Activated CD4-positive, alpha-beta T cell treated with anti-CD3 and anti-CD28 coated beads, Interleukin-2, amount 10 ng/mL, durations not matched to agents 24 days and 14 days (primary cell): ENCODE measurements at regions of chr21 and their contacts with region 1.

Region 1: GRCh38 chr21:32612075-32612998 is at the start of gene CFAP298:
- DNase-seq: peak; percentile 96
- H3K4me3 Mint-ChIP-seq: peak within 1 kb of the TSS; percentile 99
- H3K27ac Mint-ChIP-seq: peak within 1 kb of the TSS; percentile 96
- H3K4me1 Mint-ChIP-seq: peaks cover 7% of the 10 kb centered on the region
- H3K27me3 Mint-ChIP-seq: peaks cover 5% of the 10 kb centered on the region
- total RNA-seq, gene CFAP298: 52.5 and 57.6 TPM in 2 replicates

Region 2: GRCh38 chr21:32278518-32279376 is 333.6 kb before region 1 on chr21 and contains the start of gene MIS18A:
- intact Hi-C with region 1: loop called (anchors 2 kb)
- DNase-seq: peak; percentile 99
- H3K4me3 Mint-ChIP-seq: peak within 1 kb of the TSS; percentile 100
- H3K27ac Mint-ChIP-seq: peak within 1 kb of the TSS; percentile 98
- H3K4me1 Mint-ChIP-seq: peaks cover 32% of the 10 kb centered on the region
- H3K27me3 Mint-ChIP-seq: peaks cover 3% of the 10 kb centered on the region
- total RNA-seq, gene MIS18A: 27.8 and 31.3 TPM in 2 replicates

Region 3: GRCh38 chr21:32494934-32495703 is 117.2 kb before region 1 on chr21:
- intact Hi-C with region 1: loop called (anchors 2 kb)
- DNase-seq: no peak
- H3K4me3 Mint-ChIP-seq: no peak overlapping the region
- H3K27ac Mint-ChIP-seq: no peak overlapping the region
- H3K4me1 Mint-ChIP-seq: peaks cover 13% of the 10 kb centered on the region
- H3K27me3 Mint-ChIP-seq: no peaks in the 10 kb centered on the region

Region 4: GRCh38 chr21:32727687-32728455 is 115.5 kb after region 1 on chr21 and contains the start of gene SYNJ1:
- intact Hi-C with region 1: loop called (anchors 1 kb)
- DNase-seq: peak; percentile 98
- H3K4me3 Mint-ChIP-seq: peak within 1 kb of the TSS; percentile 90
- H3K27ac Mint-ChIP-seq: peak within 1 kb of the TSS; percentile 93
- H3K4me1 Mint-ChIP-seq: peaks cover 30% of the 10 kb centered on the region
- H3K27me3 Mint-ChIP-seq: no peaks in the 10 kb centered on the region
- total RNA-seq, gene SYNJ1: 11.3 and 12.6 TPM in 2 replicates

Region 5: DNA sequence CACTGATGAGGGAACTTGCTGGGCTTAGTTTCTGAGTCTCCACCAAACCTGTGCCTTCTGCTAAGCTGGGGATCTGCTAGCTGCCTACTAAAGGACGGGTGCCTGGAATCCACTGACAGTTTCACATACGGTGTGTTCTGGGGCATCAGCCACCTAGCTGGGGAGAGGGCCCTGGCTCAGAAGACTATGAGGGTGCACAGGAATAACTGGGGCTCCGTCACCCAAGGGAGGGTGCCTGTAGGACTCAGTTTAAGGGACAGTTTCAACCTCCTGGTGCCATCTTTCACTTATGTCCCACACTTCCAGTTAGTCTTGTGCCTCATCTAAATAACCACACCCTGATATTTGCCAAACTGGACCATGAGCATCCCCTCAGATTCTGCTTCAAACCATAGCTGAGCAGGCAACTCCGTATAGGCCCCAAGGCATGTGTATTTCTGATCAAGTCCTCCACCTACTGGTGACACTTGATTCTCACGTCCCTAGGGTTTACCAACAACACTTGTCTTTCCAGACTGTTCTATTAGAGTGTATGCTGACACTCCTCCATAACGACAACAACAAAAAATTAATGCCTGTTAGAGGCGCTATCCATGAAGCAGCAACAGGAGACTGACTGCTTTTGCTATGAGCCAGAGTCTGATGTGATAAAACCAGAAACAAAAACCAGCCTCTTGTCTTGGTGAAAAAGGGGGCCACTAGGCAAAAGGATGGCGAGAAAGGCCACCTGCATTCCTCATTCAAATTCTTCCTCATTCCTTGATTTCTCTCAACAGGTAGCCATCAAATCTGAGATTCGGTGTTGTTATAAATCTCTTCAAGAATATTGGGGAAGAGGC is 214.2 kb after region 1 on chr21:
- intact Hi-C with region 1: no loop called
- DNase-seq: peak; percentile 82
- H3K4me3 Mint-ChIP-seq: no peak overlapping the region
- H3K27ac Mint-ChIP-seq: no peak overlapping the region
- H3K4me1 Mint-ChIP-seq: peaks cover 3% of the 10 kb centered on the region
- H3K27me3 Mint-ChIP-seq: peaks cover 20% of the 10 kb centered on the region

Region 6: GRCh38 chr21:33479679-33480480 is 867.5 kb after region 1 on chr21 and contains the start of gene TMEM50B:
- intact Hi-C with region 1: loop called (anchors 2 kb)
- DNase-seq: peak; percentile 98
- H3K4me3 Mint-ChIP-seq: peak within 1 kb of the TSS; percentile 93
- H3K27ac Mint-ChIP-seq: peak within 1 kb of the TSS; percentile 93
- H3K4me1 Mint-ChIP-seq: peaks cover 15% of the 10 kb centered on the region
- H3K27me3 Mint-ChIP-seq: peaks cover 14% of the 10 kb centered on the region
- total RNA-seq, gene TMEM50B: 14.4 and 16.4 TPM in 2 replicates